AG04450 (cell line): ENCODE measurements at regions of chr4 and their contacts with region 1.

Region 1: DNA sequence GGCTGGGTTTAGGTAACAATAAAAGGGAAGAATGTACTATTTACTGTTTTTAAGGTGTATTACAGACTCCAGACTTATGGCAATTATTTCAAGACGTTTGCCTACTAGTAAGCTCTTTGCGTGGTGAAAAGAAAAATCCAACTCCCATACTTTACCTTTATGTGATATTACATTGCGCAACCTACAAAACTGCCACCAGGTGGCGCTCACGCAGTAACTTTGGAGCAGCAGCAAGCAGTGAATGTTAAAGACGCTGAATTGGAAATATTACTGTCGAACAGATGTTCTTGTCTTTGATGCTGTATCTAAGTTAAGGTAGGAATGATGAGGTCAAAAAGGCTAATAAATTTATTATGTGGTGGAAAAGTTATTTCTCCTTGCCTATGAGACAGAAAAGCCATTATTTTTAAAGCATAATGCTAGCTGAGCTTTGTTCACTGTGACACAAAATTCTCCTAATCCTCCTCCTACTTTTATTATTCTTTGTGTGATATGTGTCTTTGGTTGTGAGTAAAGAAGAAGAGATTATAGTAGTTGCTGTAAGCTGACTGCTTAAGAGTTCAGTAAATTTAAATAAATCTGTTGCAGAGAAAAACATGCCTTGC is 1099.8 kb upstream of the TENM3 start:
- DNase-seq: peak; percentile 56
- H3K4me3 ChIP-seq: no peak overlapping the region
- H3K27ac ChIP-seq: no peak overlapping the region
- H3K27me3 ChIP-seq: no peaks in the 10 kb centered on the region
- CTCF ChIP-seq: peak; percentile 91

Region 2: GRCh38 chr4:181468451-181468850 is 325.1 kb after region 1 on chr4:
- CTCF ChIA-PET with region 1: no interaction called
- POLR2A ChIA-PET with region 1: no interaction called
- DNase-seq: no peak
- H3K4me3 ChIP-seq: no peak overlapping the region
- H3K27ac ChIP-seq: no peak overlapping the region
- H3K27me3 ChIP-seq: no peaks in the 10 kb centered on the region
- CTCF ChIP-seq: no peak

Region 3: DNA sequence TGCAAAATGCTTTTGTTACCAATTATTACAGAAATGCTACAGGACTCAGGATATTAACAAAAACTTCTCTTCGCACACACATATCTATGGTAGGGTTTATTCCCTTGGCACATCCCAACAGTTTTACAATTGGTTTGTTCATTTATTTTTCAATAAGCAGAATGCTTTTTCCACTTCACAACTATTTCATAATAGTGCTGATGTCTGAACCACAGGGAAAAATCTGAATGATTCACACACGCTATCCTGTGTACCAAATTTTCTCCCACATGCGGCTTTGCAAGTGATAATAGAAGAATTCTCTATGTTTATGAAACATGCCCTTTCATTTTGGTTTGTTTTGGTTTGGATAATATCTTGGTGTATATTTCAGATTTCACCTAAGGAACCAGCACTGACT is 374.1 kb after region 1 on chr4:
- CTCF ChIA-PET with region 1: interaction called, 13 read pairs
- POLR2A ChIA-PET with region 1: no interaction called
- DNase-seq: no peak
- H3K4me3 ChIP-seq: no peak overlapping the region
- H3K27ac ChIP-seq: no peak overlapping the region
- H3K27me3 ChIP-seq: no peaks in the 10 kb centered on the region
- CTCF ChIP-seq: no peak

Region 4: GRCh38 chr4:182925298-182925738 is 1782.0 kb after region 1 on chr4:
- CTCF ChIA-PET with region 1: interaction called, 10 read pairs
- POLR2A ChIA-PET with region 1: no interaction called
- DNase-seq: no peak
- H3K4me3 ChIP-seq: no peak overlapping the region
- H3K27ac ChIP-seq: peak overlapping the region; percentile 47
- H3K27me3 ChIP-seq: no peaks in the 10 kb centered on the region
- CTCF ChIP-seq: peak; percentile 68